CD4-positive, alpha-beta T cell (primary cell): ENCODE measurements at regions of chr22 and their contacts with region 1.

Region 1: GRCh38 chr22:49960159-49961004 is at the start of gene PIM3:
- DNase-seq: peak; percentile 82 to 97 (median 88)
- ATAC-seq: peak; percentile 61
- H3K4me3 ChIP-seq: peak within 1 kb of the TSS; percentile 82
- H3K4me3 Mint-ChIP-seq: peak within 1 kb of the TSS; percentile 96
- H3K27ac ChIP-seq: peak within 1 kb of the TSS; percentile 82 to 91
- H3K27ac Mint-ChIP-seq: peak within 1 kb of the TSS; percentile 97
- H3K4me1 ChIP-seq: peaks cover 41% of the 10 kb centered on the region
- H3K4me1 Mint-ChIP-seq: peaks cover 18% of the 10 kb centered on the region
- H3K27me3 ChIP-seq: no peaks in the 10 kb centered on the region
- H3K27me3 Mint-ChIP-seq: no peaks in the 10 kb centered on the region
- CTCF ChIP-seq: no peak
- total RNA-seq, gene PIM3: 224 to 230 TPM

Region 2: GRCh38 chr22:49415151-49415951 is 545.0 kb before region 1 on chr22:
- CTCF ChIA-PET with region 1: no interaction called
- POLR2A ChIA-PET with region 1: no interaction called
- intact Hi-C with region 1: no loop called
- DNase-seq: no peak
- ATAC-seq: no peak
- H3K4me3 ChIP-seq: no peak overlapping the region
- H3K4me3 Mint-ChIP-seq: no peak overlapping the region
- H3K27ac ChIP-seq: no peak overlapping the region
- H3K27ac Mint-ChIP-seq: no peak overlapping the region
- H3K4me1 ChIP-seq: no peaks in the 10 kb centered on the region
- H3K4me1 Mint-ChIP-seq: no peaks in the 10 kb centered on the region
- H3K27me3 ChIP-seq: peaks cover 0 to 2% of the 10 kb centered on the region in 2 experiments
- H3K27me3 Mint-ChIP-seq: peaks cover 3% of the 10 kb centered on the region
- CTCF ChIP-seq: no peak

Region 3: GRCh38 chr22:49852898-49853894 is 107.2 kb before region 1 on chr22 and contains the start of gene ZBED4:
- CTCF ChIA-PET with region 1: no interaction called
- POLR2A ChIA-PET with region 1: no interaction called
- intact Hi-C with region 1: loop called in 1 of 2 experiments (anchors 1 kb)
- DNase-seq: peak; percentile 93 to 99 (median 98)
- ATAC-seq: peak; percentile 81
- H3K4me3 ChIP-seq: peak within 1 kb of the TSS; percentile 75
- H3K4me3 Mint-ChIP-seq: peak within 1 kb of the TSS; percentile 97
- H3K27ac ChIP-seq: peak within 1 kb of the TSS; percentile 55 to 88
- H3K27ac Mint-ChIP-seq: peak within 1 kb of the TSS; percentile 96
- H3K4me1 ChIP-seq: peaks cover 66% of the 10 kb centered on the region
- H3K4me1 Mint-ChIP-seq: peaks cover 43% of the 10 kb centered on the region
- H3K27me3 ChIP-seq: no peaks in the 10 kb centered on the region
- H3K27me3 Mint-ChIP-seq: peaks cover 3% of the 10 kb centered on the region
- CTCF ChIP-seq: no peak
- total RNA-seq, gene ZBED4: 14.8 to 15.0 TPM

Region 4: DNA sequence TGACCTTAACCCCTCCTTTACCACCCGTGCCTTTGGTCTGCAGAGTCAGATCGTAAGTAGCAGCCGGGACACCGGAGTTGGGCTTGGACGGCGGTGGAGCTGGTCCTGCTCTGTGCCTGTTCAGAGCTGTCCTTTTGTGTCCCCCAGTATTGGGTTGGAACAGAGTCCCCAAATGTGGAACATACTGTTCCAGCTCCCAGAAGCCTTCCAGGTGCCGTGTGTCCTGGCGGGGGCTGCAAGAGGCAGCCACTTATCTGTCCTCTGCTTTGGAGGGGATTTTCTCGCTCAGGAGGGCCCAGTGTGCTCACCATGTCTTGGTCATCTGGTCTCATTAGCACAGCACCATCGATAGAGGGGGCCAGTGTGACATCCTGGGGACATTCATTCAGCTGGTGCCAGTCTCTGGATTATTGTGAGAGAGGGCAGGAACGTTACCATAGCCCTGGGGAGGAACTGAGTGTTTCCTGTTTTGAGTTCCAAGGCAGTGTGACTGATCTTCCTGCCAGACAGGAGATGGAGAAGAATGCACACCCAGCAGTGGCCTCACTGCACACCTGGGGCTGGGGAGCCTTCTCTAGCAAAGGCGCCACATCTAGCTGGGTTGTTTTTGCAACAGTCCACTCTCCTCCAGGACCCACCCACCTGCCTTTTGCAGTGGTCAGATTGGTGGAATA is 29.5 kb before region 1 on chr22:
- CTCF ChIA-PET with region 1: interaction called, 11 read pairs
- POLR2A ChIA-PET with region 1: interaction called, 92 read pairs
- intact Hi-C with region 1: loop called (anchors 1 kb)
- DNase-seq: peak in 12 of 14 experiments; percentile 22 to 83 (median 48)
- ATAC-seq: peak; percentile 37
- H3K4me3 ChIP-seq: no peak overlapping the region
- H3K4me3 Mint-ChIP-seq: peak overlapping the region; percentile 73
- H3K27ac ChIP-seq: peak overlapping the region in 1 of 2 donors; percentile 39
- H3K27ac Mint-ChIP-seq: peak overlapping the region; percentile 89
- H3K4me1 ChIP-seq: peaks cover 60% of the 10 kb centered on the region
- H3K4me1 Mint-ChIP-seq: peaks cover 42% of the 10 kb centered on the region
- H3K27me3 ChIP-seq: no peaks in the 10 kb centered on the region
- H3K27me3 Mint-ChIP-seq: no peaks in the 10 kb centered on the region
- CTCF ChIP-seq: peak; percentile 59

Region 5: GRCh38 chr22:49941507-49942316 is 18.7 kb before region 1 on chr22:
- CTCF ChIA-PET with region 1: no interaction called
- POLR2A ChIA-PET with region 1: interaction called, 92 read pairs
- intact Hi-C with region 1: loop called (anchors 1 kb)
- DNase-seq: no peak
- ATAC-seq: no peak
- H3K4me3 ChIP-seq: no peak overlapping the region
- H3K4me3 Mint-ChIP-seq: no peak overlapping the region
- H3K27ac ChIP-seq: no peak overlapping the region
- H3K27ac Mint-ChIP-seq: peak overlapping the region; percentile 63
- H3K4me1 ChIP-seq: peaks cover 62% of the 10 kb centered on the region
- H3K4me1 Mint-ChIP-seq: peaks cover 6% of the 10 kb centered on the region
- H3K27me3 ChIP-seq: no peaks in the 10 kb centered on the region
- H3K27me3 Mint-ChIP-seq: no peaks in the 10 kb centered on the region
- CTCF ChIP-seq: no peak

Region 6: DNA sequence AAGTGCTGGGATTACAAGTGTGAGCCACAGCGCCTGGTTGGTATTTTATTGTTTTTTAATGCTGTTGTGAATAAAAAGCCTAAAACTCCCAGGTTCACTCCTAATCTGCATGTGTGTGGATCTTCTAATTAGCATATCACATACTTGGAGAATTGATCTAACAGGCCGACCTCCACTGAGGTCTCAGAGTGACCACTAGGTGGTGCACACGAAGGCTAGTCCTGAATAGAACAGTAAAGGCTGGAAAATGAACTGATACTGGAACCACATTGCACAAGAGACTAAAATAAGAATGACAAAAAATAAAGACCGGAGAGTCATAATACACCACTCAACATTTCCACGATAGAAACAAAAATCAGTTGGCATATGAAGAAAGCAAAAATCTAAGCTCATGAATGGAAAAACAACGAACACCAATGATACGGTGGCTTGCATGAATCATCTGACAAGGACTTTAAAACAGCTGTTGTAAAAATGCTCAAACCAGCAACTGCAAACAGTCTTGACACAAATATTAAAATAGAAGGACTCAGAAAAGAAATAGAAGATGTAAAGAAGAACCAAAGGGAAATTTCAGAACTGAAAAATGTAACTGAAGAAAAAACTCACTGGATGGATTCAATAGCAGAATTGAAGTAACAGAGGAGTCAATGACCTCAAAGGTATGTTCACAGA is 19.3 kb after region 1 on chr22:
- CTCF ChIA-PET with region 1: interaction called, 4 read pairs
- POLR2A ChIA-PET with region 1: interaction called, 7 read pairs
- intact Hi-C with region 1: loop called in 1 of 2 experiments (anchors 2 kb)
- DNase-seq: peak in 4 of 14 experiments; percentile 33 to 68 (median 54)
- ATAC-seq: no peak
- H3K4me3 ChIP-seq: no peak overlapping the region
- H3K4me3 Mint-ChIP-seq: no peak overlapping the region
- H3K27ac ChIP-seq: no peak overlapping the region
- H3K27ac Mint-ChIP-seq: no peak overlapping the region
- H3K4me1 ChIP-seq: peaks cover 32% of the 10 kb centered on the region
- H3K4me1 Mint-ChIP-seq: peaks cover 29% of the 10 kb centered on the region
- H3K27me3 ChIP-seq: peaks cover 13 to 15% of the 10 kb centered on the region in 2 experiments
- H3K27me3 Mint-ChIP-seq: peaks cover 21% of the 10 kb centered on the region
- CTCF ChIP-seq: peak; percentile 44

Region 7: DNA sequence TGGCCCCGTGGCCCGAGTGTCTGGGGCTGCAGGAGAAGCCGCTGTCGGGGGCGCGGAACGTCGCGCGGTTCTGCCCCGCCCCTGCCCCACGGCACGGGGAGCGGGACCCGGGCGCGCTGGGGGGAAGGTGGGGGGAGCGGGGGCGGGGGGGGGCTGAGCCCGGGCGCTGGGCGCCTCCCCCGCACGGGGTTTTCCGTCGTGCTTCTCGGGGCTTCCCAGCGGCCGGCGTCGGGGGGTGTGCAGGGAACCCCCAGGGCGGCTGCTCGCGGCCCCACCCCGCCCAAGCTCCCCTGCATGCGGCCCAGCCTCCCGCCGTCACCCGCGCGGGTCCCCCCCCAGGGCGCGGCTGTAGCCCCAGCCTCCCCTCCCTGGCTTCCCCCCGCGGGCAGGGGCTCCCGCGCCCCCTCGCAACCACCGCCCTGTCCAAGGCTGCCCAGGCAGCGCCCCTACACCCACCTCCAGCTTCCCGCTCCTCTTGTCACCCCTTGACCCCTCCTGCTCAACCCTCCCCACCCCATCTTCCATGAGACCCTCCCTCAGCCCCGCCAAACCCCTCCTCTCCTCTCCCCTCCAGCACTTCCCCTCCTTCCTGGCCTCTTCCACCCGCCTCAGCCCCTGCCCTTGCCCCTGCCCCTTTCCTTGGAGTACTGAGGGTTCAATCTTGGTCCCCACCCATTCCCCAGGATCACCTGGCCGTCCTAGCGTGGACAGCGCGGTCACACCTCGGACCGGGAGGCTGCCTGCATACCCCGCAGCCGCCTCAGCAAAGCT is 50.5 kb after region 1 on chr22:
- CTCF ChIA-PET with region 1: no interaction called
- POLR2A ChIA-PET with region 1: no interaction called
- intact Hi-C with region 1: no loop called
- DNase-seq: peak in 9 of 14 experiments; percentile 32 to 92 (median 43)
- ATAC-seq: peak; percentile 75
- H3K4me3 ChIP-seq: peak overlapping the region; percentile 10
- H3K4me3 Mint-ChIP-seq: peak overlapping the region; percentile 51
- H3K27ac ChIP-seq: no peak overlapping the region
- H3K27ac Mint-ChIP-seq: no peak overlapping the region
- H3K4me1 ChIP-seq: peaks cover 48% of the 10 kb centered on the region
- H3K4me1 Mint-ChIP-seq: peaks cover 10% of the 10 kb centered on the region
- H3K27me3 ChIP-seq: peaks cover 16 to 26% of the 10 kb centered on the region in 2 experiments
- H3K27me3 Mint-ChIP-seq: peaks cover 26% of the 10 kb centered on the region
- CTCF ChIP-seq: no peak

Region 8: DNA sequence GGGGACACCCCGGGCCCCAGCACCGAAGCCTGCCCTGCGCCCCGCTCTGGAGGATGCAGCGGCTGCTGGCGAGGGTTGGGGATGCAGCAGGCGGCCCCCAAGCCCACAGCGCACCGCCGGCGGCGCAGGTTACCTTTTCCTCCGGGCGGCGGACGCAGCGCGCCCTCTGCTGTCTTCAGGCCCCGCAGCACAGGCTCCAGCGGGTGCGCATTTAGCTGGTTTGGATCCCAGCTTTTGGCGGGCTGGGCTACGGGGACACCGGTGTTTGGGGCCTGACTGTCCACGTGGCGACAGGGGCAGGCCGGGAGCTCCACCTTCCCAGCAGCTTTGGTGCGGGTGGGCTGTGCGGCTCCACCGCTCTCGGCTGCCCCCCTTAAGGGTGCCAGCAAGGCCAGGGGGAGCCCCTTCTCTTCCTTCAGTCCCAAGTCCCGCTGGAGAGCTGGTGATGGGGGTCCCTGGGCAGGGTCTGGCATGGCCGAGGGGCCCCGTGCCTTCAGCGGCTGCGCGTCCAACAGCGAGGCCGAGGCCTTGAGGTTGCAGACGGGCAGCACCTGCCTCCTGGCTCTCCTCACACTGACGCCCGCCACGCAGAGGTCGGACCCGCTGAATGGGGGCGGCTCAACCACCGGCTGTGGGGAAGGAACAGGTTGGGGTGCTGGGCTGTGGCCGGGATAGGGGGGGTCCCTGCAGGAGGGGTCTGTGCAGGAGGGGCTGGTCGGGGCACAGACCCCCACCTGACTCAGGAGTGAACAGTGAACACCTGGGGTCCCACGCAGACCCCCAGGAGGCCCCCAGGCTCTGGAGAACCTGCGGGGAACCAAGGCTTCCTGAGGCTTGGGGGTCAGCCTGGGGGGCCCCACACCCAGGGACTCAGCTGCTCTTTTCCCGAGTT is 70.2 kb after region 1 on chr22:
- CTCF ChIA-PET with region 1: interaction called, 4 read pairs
- POLR2A ChIA-PET with region 1: interaction called, 4 read pairs
- intact Hi-C with region 1: loop called in 1 of 2 experiments (anchors 1 kb)
- DNase-seq: peak; percentile 69 to 93 (median 78)
- ATAC-seq: peak; percentile 95
- H3K4me3 ChIP-seq: no peak overlapping the region
- H3K4me3 Mint-ChIP-seq: no peak overlapping the region
- H3K27ac ChIP-seq: no peak overlapping the region
- H3K27ac Mint-ChIP-seq: no peak overlapping the region
- H3K4me1 ChIP-seq: peaks cover 23% of the 10 kb centered on the region
- H3K4me1 Mint-ChIP-seq: peaks cover 7% of the 10 kb centered on the region
- H3K27me3 ChIP-seq: peaks cover 9 to 22% of the 10 kb centered on the region in 2 experiments
- H3K27me3 Mint-ChIP-seq: peaks cover 14% of the 10 kb centered on the region
- CTCF ChIP-seq: peak; percentile 86